WTC11 (cell line): ENCODE measurements at regions of chr2 and their contacts with region 1.

Region 1: GRCh38 chr2:127591221-127591923 is 54.6 kb upstream of the GPR17 start:
- DNase-seq: peak; percentile 88
- ATAC-seq: peak; percentile 98
- H3K4me3 Mint-ChIP-seq: no peak overlapping the region
- H3K27ac Mint-ChIP-seq: no peak overlapping the region
- H3K4me1 Mint-ChIP-seq: peaks cover 3% of the 10 kb centered on the region; the same call in 1 of the 2 replicates
- H3K27me3 Mint-ChIP-seq: no peaks in the 10 kb centered on the region
- CTCF ChIP-seq: peak; percentile 61

Region 2: DNA sequence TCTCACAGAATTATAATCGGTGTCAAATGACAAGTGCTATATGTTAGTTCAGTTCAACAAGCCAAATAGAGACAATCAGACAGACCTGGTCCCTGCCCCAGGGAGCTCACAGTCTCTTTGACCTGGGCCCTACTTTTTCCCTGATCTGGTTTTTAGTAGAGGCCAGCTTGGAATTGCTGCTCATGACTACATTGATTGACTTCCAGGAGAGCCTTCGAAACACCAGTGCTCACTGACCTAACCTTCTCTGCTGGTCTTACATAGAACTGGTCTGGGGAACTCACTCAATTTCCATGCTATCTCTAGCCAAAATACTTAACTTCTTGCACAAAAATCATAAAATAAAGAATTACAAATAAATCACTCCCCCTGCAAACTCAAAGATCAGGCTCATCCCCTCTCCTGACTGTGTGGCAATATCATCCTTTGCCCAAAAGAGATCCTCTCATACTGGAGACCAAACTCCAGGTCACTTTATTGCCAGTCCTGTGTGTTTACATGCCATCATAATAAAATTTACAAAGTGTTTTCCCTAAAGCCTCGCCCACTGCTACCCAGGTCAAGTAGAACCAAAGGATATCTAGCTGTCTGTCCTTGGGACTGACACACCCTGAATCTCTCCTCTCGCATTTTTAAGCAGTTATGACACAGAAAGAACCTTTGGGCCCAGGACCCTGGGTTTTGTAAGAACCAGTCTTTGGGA is 119.9 kb before region 1 on chr2:
- CTCF ChIA-PET with region 1: no interaction called
- POLR2A ChIA-PET with region 1: no interaction called
- DNase-seq: no peak
- ATAC-seq: no peak
- H3K4me3 Mint-ChIP-seq: no peak overlapping the region
- H3K27ac Mint-ChIP-seq: no peak overlapping the region
- H3K4me1 Mint-ChIP-seq: no peaks in the 10 kb centered on the region
- H3K27me3 Mint-ChIP-seq: no peaks in the 10 kb centered on the region
- CTCF ChIP-seq: no peak

Region 3: DNA sequence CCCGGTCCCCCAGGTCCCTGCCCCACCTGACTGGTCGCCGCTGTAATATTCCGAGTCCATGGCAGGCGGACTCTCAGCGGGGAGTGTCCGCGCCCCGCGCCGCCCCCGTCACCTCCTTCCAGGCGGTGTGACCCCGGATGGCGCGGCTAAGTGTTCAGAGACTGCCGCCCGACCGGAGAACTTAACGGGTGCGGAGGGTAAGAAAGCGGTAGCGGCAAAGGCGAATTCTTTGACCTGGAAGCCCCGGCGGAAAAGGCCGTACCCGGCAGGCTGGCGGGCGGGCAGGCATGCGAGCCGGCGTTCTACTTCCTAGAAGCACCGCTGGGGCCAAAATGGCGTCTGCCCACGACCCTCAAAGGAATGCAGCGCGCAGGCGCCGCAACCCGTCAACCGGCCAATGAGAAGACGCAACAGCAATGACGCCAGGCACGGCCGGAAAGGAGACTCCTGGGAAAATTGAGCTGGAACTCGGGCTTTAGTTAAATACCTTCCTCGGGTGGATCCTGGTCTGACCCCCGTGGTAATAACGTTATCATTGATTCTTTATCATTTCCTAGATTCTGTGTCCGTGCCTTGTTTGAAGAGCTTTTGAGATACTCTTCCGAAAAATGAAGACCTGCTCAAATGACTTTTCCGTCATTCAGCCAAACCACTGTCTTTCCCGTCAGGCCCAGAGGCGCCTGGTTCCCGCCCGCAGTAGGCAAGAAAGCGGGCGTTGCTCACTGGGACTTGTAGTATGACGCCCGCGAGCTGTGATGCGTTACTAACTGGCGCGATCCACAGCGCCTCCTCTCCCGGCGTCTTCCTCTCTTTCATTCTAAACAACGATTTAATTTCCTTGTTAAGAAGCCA is 65.0 kb before region 1 on chr2 and contains the start of gene IWS1:
- CTCF ChIA-PET with region 1: interaction called, 16 read pairs
- POLR2A ChIA-PET with region 1: no interaction called
- DNase-seq: peak; percentile 95
- ATAC-seq: peak; percentile 91
- H3K4me3 Mint-ChIP-seq: peak within 1 kb of the TSS; percentile 98
- H3K27ac Mint-ChIP-seq: peak within 1 kb of the TSS; percentile 99
- H3K4me1 Mint-ChIP-seq: peaks cover 22% of the 10 kb centered on the region
- H3K27me3 Mint-ChIP-seq: peaks cover 7% of the 10 kb centered on the region; the same call in 1 of the 2 replicates
- CTCF ChIP-seq: no peak
- total RNA-seq, gene IWS1: 69.2 to 70.5 TPM (median 69.3 TPM) in 3 replicates

Region 4: DNA sequence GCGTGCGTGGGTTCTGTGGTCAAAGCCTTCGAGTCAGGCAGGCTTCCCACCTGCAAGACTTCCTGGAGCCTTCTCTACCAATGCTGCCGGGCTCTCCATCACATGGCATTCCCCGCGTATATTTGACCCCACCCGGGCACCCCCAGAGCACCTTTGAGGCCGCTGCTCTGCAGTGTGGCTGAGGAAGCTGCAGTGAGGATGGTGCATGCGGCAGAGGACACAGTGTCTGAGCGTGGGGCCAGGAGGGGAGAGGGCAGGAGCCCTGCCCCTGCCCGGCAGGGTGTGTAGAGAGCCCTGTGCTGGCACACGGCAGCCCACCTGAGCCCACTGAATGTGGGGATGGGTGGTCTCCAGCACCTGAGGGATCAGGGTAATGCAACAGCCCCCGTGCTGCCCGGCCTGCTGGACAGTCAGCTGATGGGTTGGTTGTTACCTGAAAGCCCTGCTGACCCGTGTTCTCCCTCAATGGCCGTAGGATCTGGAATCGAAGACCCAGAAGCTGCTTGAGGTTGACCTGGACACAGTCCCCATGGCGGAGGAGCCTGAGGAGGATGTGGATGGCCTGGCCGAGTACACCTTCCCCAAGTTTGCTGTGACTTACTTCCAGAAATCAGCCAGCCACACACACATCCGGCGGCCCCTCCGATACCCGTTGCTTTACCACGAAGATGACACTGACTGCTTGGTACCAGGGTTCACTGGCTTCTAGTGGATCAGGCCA is 17.8 kb after region 1 on chr2:
- CTCF ChIA-PET with region 1: interaction called, 17 read pairs
- POLR2A ChIA-PET with region 1: no interaction called
- DNase-seq: no peak
- ATAC-seq: no peak
- H3K4me3 Mint-ChIP-seq: no peak overlapping the region
- H3K27ac Mint-ChIP-seq: no peak overlapping the region
- H3K4me1 Mint-ChIP-seq: no peaks in the 10 kb centered on the region
- H3K27me3 Mint-ChIP-seq: no peaks in the 10 kb centered on the region
- CTCF ChIP-seq: no peak

Region 5: GRCh38 chr2:127640082-127641072 is 49.0 kb after region 1 on chr2:
- CTCF ChIA-PET with region 1: interaction called, 70 read pairs
- POLR2A ChIA-PET with region 1: interaction called, 3 read pairs
- DNase-seq: peak; percentile 68
- ATAC-seq: peak; percentile 57
- H3K4me3 Mint-ChIP-seq: no peak overlapping the region
- H3K27ac Mint-ChIP-seq: no peak overlapping the region
- H3K4me1 Mint-ChIP-seq: peaks cover 11% of the 10 kb centered on the region
- H3K27me3 Mint-ChIP-seq: no peaks in the 10 kb centered on the region
- CTCF ChIP-seq: peak; percentile 58

Region 6: GRCh38 chr2:127675331-127676261 is 84.2 kb after region 1 on chr2 and contains the start of gene LIMS2:
- CTCF ChIA-PET with region 1: interaction called, 46 read pairs
- POLR2A ChIA-PET with region 1: no interaction called
- DNase-seq: peak; percentile 52
- ATAC-seq: peak; percentile 57
- H3K4me3 Mint-ChIP-seq: peak within 1 kb of the TSS; percentile 79
- H3K27ac Mint-ChIP-seq: no peak within 1 kb of the TSS
- H3K4me1 Mint-ChIP-seq: peaks cover 9% of the 10 kb centered on the region
- H3K27me3 Mint-ChIP-seq: peaks cover 61% of the 10 kb centered on the region
- CTCF ChIP-seq: no peak
- total RNA-seq, gene LIMS2: 1.9 to 2.5 TPM (median 2.4 TPM) in 3 replicates

Region 7: GRCh38 chr2:127701193-127701650 is 109.8 kb after region 1 on chr2 and contains the start of gene SFT2D3:
- CTCF ChIA-PET with region 1: interaction called, 61 read pairs
- POLR2A ChIA-PET with region 1: interaction called, 3 read pairs
- DNase-seq: peak; percentile 89
- ATAC-seq: peak; percentile 79
- H3K4me3 Mint-ChIP-seq: peak within 1 kb of the TSS; percentile 87
- H3K27ac Mint-ChIP-seq: peak within 1 kb of the TSS; percentile 97
- H3K4me1 Mint-ChIP-seq: peaks cover 28% of the 10 kb centered on the region
- H3K27me3 Mint-ChIP-seq: peaks cover 36% of the 10 kb centered on the region
- CTCF ChIP-seq: no peak
- total RNA-seq, gene SFT2D3: 9.2 to 10.5 TPM (median 9.8 TPM) in 3 replicates